ENCODE measurements at regions of chr15 and their contacts with region 1.

Region 1: DNA sequence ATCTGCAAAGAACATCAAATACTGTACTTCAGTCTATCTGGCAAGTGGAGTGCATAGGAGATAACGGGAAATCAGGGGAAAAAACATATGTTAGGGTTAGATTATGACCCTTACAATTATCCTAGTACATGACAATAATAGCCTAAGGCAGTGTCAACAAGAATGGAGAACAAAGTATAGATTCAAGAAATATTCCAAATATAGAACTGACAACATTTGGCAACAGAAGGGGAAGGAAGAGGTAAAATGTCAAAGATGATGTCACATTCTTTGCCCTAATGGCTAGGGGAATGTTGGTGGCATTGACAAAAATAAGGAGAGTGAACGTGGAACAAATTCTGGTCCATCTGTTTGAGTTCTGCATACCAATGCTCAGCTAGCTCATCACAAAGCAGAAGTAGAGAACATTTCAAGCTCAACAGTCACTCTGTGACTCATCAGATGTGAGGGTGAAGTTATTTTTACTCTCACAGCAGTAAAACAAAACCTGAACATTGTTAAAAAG is 15.5 kb upstream of the ATP8B4 start:
- DNase-seq: no peak
- H3K4me3 Mint-ChIP-seq: peak overlapping the region; percentile 8
- H3K27ac Mint-ChIP-seq: peak overlapping the region; percentile 91
- H3K4me1 Mint-ChIP-seq: peaks cover 47% of the 10 kb centered on the region
- H3K27me3 Mint-ChIP-seq: no peaks in the 10 kb centered on the region

Region 2: DNA sequence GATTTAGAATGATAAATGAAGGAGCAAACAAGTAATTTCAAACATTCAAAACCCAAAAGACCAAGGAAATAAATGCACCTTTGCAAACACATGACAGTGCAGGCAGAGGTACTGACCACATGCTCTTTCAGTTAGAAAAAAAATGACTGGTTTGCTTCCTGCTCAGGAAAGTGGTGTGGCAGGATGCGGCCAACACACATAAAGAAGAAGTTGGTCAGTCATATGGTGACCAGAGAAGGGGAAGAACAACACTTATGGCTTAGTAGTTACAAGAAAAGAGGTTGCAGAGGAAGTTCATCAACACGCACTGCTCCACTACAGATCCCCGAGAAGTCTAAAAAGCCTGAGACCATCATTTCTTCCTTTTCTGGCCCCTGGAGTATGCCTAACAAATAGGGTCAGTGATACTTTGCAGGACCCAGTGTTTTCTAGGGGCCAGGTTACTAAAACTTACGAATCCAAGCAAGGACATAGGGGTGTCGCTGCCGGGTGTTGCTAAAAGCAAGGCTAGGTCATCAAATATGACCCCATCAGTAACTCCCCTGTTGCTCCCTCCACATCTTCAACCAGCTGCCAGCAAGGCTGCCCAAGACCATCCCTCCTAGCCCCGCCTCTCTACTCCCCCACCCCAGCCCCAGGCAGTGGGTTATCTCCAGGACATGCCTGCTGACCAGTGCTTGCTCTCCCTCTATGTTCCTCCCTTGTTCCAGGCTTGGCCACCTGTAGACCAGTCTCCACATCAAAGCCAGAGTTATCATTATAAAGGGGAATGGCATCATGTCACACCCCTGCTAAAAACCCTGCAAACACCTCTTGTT is 26.8 kb before region 1 on chr15:
- CTCF ChIA-PET with region 1: interaction called, 4 read pairs
- POLR2A ChIA-PET with region 1: interaction called, 21 read pairs
- DNase-seq: peak; percentile 64
- H3K4me3 Mint-ChIP-seq: peak overlapping the region; percentile 42
- H3K27ac Mint-ChIP-seq: peak overlapping the region; percentile 91
- H3K4me1 Mint-ChIP-seq: peaks cover 89% of the 10 kb centered on the region
- H3K27me3 Mint-ChIP-seq: no peaks in the 10 kb centered on the region

Region 3: GRCh38 chr15:50119063-50120040 is 15.2 kb before region 1 on chr15 and contains the start of gene ATP8B4:
- CTCF ChIA-PET with region 1: interaction called, 5 read pairs
- POLR2A ChIA-PET with region 1: interaction called, 34 read pairs
- DNase-seq: peak; percentile 62
- H3K4me3 Mint-ChIP-seq: peak within 1 kb of the TSS; percentile 84
- H3K27ac Mint-ChIP-seq: peak within 1 kb of the TSS; percentile 88
- H3K4me1 Mint-ChIP-seq: peaks cover 54% of the 10 kb centered on the region
- H3K27me3 Mint-ChIP-seq: peaks cover 2% of the 10 kb centered on the region
- total RNA-seq, gene ATP8B4: 19.9 to 20.7 TPM

Measured in activated CD4-positive, alpha-beta memory T cell treated with anti-CD3 and anti-CD28 coated beads, Interleukin-2, amount 10 ng/mL, durations not matched to agents 7 days and 5 days (primary cell).